GM10248 (cell line): ENCODE measurements at regions of chr2 and their contacts with region 1.

Region 1: DNA sequence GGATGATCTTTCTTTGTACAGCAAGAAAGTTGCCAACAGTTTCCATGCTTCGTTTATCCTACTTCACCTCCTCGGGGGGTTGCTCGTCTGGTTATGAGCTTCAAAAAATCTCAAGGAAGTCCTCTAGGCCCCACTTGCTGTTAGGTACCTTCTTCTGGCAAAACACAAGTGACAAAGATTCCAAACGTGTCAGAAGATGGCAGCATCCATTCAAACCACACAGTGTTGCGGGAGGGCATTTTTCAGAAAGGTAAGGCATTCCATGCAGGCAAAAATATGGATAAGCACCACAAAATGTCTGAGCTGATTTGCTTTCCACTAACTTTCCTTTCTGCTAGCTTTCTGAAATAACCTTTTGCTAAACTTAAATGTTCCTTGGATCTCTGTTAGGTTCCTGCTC is 13.2 kb upstream of the OR6B3 start:
- DNase-seq: no peak
- CTCF ChIP-seq: no peak

Region 2: GRCh38 chr2:240143801-240144648 is 77.5 kb after region 1 on chr2:
- CTCF ChIA-PET with region 1: interaction called, 112 read pairs
- POLR2A ChIA-PET with region 1: no interaction called
- DNase-seq: peak; percentile 88
- CTCF ChIP-seq: peak; percentile 94